Astrocyte of the cerebellum (primary cell): ENCODE measurements at regions of chr2 and their contacts with region 1.

Region 1: DNA sequence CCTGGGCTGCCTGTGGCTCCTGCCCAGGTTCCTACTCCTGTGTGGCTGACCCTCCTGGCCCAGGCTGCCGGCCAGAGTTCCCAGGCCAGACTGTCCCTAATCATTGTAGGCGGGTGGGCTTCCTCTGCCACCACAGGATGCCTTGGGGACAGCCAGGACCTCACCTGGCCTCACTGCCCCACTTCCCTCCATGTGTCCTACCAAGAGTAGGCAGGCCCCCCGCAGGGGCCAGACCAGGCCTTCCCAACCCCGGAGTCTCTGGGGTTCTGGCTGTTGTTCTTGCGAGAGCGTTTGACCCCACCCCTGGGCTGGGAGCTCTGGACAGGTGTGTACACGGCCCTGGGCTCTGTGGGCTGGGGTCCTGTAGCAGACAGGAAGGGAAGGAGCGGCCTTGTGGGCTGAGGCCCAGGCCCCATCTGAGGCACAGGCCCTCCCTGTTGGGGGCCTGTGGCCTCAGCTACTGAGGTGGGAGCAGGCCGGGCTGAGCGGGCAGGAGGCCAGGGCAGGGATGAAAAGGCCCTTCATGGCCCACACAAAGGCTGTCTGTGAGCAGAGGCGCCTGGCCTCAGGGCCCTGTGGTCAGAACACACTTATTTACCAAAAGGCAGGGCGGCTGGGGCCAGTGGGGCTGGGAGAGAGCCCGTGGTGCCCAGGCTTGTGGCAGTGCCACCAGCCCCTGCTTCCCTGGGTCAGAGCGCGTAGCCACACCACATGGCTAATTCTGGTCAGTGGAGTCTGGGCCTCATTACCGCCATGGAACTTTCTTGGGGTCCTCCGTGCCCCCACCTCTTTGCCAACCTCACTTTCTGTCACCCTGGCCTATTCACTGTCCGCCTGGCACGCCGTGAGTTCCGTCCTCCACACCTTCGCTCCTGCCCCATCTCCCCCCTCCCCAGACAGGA is 2.0 kb downstream of the SNORC start:
- DNase-seq: no peak
- H3K4me3 ChIP-seq: no peak overlapping the region
- CTCF ChIP-seq: no peak

Region 2: GRCh38 chr2:232789082-232789481 is 83.0 kb before region 1 on chr2:
- in situ Hi-C with region 1: loop called (anchors 5 kb)
- DNase-seq: no peak
- H3K4me3 ChIP-seq: no peak overlapping the region
- CTCF ChIP-seq: no peak

Region 3: DNA sequence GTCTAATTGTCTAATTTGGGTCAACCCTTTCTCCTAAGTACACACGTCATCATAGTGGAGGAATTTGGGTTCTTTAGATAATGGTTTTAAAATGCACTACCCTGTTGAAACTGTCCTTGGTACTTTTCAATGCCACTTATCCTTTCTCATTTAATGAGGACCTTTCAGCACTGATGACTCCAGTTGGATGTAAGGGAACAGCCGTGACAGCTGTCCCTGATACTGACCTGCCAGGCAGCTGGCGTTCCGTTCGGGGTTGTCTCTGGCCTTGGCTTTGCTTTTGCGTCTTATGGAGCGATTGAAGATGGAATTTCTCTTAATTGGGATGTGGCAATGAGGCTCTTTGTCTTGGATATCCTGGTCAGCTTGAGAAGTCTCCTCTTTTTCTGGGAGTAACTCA is 102.3 kb after region 1 on chr2:
- in situ Hi-C with region 1: no loop called
- DNase-seq: no peak
- H3K4me3 ChIP-seq: no peak overlapping the region
- CTCF ChIP-seq: no peak